Mammary epithelial cell (primary cell): ENCODE measurements at regions of chr4 and their contacts with region 1.

Region 1: DNA sequence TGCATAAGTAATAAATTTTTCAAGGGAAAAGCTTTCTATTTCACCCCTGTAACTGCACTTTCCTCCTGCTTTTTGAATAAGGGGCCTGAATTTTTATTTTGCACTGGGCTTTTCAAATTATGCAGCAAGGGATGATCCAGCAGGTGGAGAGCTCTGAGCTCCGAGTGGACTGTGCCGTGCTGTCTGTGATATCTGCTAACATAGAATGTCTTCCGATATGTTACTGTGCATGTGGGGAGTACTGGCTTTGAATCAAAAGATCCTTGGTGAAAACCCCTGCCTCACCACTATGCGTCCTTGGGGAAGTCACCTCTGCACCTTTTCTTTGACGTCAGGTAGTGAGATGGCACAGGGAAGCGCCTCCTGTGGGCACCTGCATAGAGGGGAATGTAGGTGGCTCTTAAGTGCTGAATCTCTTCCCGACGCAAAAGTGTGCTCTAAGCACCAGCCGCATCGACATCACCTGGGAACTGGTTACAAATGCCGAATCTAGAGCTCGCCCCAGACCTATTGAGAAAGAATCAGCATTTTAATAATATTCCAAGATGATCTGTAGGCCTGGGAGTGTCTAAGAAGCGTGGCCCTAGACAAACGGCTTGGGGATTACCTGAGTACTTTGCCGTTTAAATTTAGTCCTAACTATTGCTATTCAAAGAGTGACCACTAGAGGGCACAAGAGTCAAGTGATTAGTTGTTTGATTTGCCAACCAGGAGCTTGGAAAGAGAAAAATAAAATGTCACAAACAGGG is 19.2 kb upstream of the WFS1 start:
- DNase-seq: peak; percentile 57
- H3K4me3 ChIP-seq: no peak overlapping the region
- H3K27ac ChIP-seq: no peak overlapping the region
- H3K4me1 ChIP-seq: no peaks in the 10 kb centered on the region
- H3K27me3 ChIP-seq: peaks cover 5% of the 10 kb centered on the region
- CTCF ChIP-seq: peak; percentile 71 to 80

Region 2: GRCh38 chr4:5998333-5998936 is 252.0 kb before region 1 on chr4:
- CTCF ChIA-PET with region 1: no interaction called
- dilution Hi-C with region 1: no loop called
- in situ Hi-C with region 1: no loop called
- intact Hi-C with region 1: loop called (anchors 1 kb)
- DNase-seq: peak; percentile 20
- H3K4me3 ChIP-seq: no peak overlapping the region
- H3K27ac ChIP-seq: no peak overlapping the region
- H3K4me1 ChIP-seq: no peaks in the 10 kb centered on the region
- H3K27me3 ChIP-seq: no peaks in the 10 kb centered on the region
- CTCF ChIP-seq: peak; percentile 87 to 91

Region 3: GRCh38 chr4:6105311-6105911 is 145.0 kb before region 1 on chr4:
- CTCF ChIA-PET with region 1: no interaction called
- dilution Hi-C with region 1: no loop called
- in situ Hi-C with region 1: no loop called
- intact Hi-C with region 1: no loop called
- DNase-seq: no peak
- H3K4me3 ChIP-seq: no peak overlapping the region
- H3K27ac ChIP-seq: no peak overlapping the region
- H3K4me1 ChIP-seq: no peaks in the 10 kb centered on the region
- H3K27me3 ChIP-seq: no peaks in the 10 kb centered on the region
- CTCF ChIP-seq: no peak

Region 4: DNA sequence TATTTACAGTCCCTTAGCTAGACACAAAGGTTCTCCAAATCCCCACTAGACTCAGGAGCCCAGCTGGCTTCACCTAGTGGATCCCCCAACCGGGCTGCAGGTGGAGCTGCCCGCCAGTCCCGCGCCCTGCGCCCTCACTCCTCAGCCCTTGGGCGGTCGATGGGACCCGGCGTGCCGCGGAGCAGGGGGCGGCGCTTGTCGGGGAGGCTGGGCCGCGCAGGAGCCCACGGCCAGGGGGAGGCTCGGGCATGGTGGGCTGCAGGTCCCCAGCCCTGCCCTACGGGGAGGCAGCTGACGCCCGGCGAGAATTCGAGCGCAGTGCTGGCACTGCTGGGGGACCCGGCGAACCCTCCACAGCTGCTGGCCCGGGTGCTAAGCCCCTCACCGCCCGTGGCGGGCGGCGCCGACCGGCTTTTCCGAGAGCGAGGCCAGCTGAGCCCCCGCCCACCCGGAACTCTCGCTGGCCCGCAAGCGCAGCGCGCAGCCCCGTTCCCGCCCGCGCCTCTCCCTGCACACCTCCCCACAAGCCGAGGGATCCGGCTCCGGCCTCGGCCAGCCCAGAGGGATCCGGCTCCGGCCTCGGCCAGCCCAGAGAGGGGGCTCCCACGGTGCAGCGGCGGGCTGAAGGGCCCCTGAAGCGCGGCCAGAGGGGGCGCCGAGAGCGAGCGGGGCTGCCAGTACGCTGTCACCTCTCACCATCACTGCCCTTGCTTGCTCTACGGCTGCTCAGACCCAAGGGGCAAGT is 58.7 kb after region 1 on chr4:
- CTCF ChIA-PET with region 1: no interaction called
- dilution Hi-C with region 1: loop called (anchors 5 kb)
- in situ Hi-C with region 1: no loop called
- intact Hi-C with region 1: no loop called
- DNase-seq: no peak
- H3K4me3 ChIP-seq: peak overlapping the region in 1 of 3 experiments; percentile 23
- H3K27ac ChIP-seq: no peak overlapping the region
- H3K4me1 ChIP-seq: no peaks in the 10 kb centered on the region
- H3K27me3 ChIP-seq: peaks cover 17% of the 10 kb centered on the region
- CTCF ChIP-seq: peak in 1 of 2 donors; percentile 12

Region 5: GRCh38 chr4:6327041-6327917 is 76.9 kb after region 1 on chr4:
- CTCF ChIA-PET with region 1: interaction called, 13 read pairs
- dilution Hi-C with region 1: no loop called
- in situ Hi-C with region 1: loop called (anchors 5 kb)
- intact Hi-C with region 1: loop called (anchors 1 kb)
- DNase-seq: peak; percentile 40
- H3K4me3 ChIP-seq: no peak overlapping the region
- H3K27ac ChIP-seq: no peak overlapping the region
- H3K4me1 ChIP-seq: peaks cover 9% of the 10 kb centered on the region
- H3K27me3 ChIP-seq: no peaks in the 10 kb centered on the region
- CTCF ChIP-seq: peak; percentile 78 to 92

Region 6: DNA sequence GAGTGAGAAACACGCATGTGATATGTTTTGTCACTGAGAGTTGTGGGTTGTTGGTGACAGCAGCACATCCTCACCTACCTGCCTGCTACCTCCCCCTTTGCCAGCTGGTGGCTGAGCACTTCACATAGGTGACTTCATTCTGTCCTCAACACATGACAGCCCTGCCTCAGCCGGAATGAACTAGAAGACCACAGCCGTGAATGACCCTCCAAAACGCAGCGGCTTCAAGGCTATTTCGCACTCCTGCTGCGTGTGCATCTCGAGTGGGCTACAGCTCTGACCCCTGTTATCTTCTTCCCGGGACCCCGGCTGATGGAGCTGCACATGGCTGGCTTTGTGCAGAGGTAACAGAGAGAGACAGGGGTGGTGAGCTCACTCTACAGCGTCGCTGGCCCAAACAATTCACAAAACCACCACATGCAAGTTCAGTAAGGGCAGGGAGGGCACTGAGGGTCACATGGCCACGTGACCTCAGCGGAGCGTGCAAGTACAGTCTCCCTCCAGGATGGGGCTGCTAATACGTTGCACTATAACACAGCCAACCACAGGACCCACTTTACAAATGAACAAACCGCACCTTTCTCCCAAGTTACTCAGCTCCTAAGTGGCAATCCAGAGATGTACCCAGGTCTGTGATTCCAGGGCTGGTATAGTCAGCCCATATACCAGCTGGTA is 228.3 kb after region 1 on chr4:
- CTCF ChIA-PET with region 1: no interaction called
- dilution Hi-C with region 1: no loop called
- in situ Hi-C with region 1: no loop called
- intact Hi-C with region 1: no loop called
- DNase-seq: no peak
- H3K4me3 ChIP-seq: no peak overlapping the region
- H3K27ac ChIP-seq: no peak overlapping the region
- H3K4me1 ChIP-seq: no peaks in the 10 kb centered on the region
- H3K27me3 ChIP-seq: peaks cover 2% of the 10 kb centered on the region
- CTCF ChIP-seq: no peak

Region 7: DNA sequence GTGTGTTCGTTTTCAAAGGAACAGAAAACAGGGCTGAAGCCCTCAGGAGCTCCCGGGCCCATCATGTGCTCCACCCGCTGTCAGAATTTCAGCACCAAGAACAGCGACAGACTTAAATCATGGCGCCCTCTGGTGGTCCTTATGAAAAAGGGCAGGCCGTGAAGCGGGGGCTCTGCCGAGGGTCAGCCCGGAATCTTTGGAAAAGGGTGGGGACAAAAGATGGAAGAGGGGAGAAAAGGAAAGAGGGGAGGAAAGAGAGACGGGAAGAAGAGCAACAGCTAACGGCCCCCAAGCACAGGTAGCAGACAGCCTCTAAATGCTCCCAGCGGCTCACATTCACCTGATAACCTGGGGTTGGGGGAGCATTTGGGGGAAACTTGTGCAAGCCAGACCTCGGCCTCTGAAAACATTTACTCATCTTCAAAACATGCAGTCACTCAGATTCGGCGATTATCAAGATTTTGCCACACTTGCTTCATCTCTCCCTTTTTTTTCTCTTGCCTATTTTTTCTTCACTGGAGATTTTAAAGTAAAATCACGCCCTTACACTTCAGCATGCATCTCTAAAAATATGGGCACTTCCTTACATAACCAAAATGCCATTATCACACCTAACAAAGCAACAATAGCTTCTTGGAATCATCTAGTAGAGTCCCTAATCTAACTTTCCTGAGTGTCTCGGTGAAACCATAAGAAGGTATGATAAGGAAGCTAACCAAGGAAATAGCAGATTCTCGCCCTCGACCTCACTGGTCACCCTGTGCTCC is 296.5 kb after region 1 on chr4:
- CTCF ChIA-PET with region 1: no interaction called
- dilution Hi-C with region 1: no loop called
- in situ Hi-C with region 1: no loop called
- intact Hi-C with region 1: loop called (anchors 1 kb)
- DNase-seq: peak; percentile 28
- H3K4me3 ChIP-seq: no peak overlapping the region
- H3K27ac ChIP-seq: no peak overlapping the region
- H3K4me1 ChIP-seq: no peaks in the 10 kb centered on the region
- H3K27me3 ChIP-seq: no peaks in the 10 kb centered on the region
- CTCF ChIP-seq: peak; percentile 69 to 94